Activated CD8-positive, alpha-beta memory T cell treated with anti-CD3 and anti-CD28 coated beads, Interleukin-2, amount 10 ng/mL, durations not matched to agents 7 days and 5 days (primary cell): ENCODE measurements at regions of chr9 and their contacts with region 1.

Region 1: DNA sequence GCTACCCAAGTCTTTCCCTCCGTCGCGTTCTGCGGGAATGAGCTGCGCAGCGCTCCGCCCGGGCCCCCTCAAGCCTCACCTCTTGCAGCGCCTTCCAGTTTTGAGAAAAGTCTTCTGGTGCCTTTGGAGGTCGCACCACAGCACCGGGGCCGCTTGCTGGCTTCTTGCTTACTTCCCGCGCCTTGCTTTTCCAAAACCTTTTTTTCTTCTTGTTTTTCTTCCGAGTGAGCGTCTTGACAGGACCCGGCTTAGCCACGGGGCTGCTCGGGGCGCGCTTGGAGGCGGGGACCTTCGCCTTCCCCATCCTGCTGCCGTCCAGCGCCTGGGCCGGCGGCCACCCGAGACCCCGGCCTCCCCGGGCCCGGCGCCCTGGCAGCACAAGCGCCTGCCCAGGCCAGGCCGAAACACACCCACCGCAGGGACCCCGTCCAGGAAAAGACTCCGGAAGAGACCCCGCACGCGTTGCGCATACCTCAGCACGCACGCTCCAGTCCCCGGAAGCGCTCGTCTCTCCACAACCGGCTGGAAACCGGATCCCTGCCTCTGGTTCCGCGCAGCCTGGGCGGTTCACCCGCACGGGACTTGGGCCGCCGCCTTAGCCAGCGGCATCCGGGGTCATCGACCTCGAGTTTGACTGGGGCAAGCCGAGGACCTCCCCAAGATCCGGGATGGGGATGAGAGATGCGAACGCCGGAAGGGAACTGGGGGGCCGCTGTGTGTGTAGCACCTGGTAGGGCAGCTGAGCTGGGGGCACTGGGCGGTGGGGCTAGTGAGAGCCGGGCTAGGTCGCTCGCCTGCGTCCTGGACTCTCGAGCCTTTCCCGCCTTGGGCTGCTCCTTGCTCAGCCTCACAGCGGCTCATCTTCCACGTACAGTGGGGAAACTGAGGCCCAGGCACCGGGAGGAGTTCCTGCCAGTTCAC is at the start of gene REXO4:
- DNase-seq: peak; percentile 92
- ATAC-seq: peak; percentile 90
- H3K4me3 Mint-ChIP-seq: peak within 1 kb of the TSS; percentile 88
- H3K27ac Mint-ChIP-seq: peak within 1 kb of the TSS; percentile 94
- H3K4me1 Mint-ChIP-seq: peaks cover 64% of the 10 kb centered on the region
- H3K27me3 Mint-ChIP-seq: no peaks in the 10 kb centered on the region
- total RNA-seq, gene REXO4: 27.5 to 34.1 TPM

Region 2: DNA sequence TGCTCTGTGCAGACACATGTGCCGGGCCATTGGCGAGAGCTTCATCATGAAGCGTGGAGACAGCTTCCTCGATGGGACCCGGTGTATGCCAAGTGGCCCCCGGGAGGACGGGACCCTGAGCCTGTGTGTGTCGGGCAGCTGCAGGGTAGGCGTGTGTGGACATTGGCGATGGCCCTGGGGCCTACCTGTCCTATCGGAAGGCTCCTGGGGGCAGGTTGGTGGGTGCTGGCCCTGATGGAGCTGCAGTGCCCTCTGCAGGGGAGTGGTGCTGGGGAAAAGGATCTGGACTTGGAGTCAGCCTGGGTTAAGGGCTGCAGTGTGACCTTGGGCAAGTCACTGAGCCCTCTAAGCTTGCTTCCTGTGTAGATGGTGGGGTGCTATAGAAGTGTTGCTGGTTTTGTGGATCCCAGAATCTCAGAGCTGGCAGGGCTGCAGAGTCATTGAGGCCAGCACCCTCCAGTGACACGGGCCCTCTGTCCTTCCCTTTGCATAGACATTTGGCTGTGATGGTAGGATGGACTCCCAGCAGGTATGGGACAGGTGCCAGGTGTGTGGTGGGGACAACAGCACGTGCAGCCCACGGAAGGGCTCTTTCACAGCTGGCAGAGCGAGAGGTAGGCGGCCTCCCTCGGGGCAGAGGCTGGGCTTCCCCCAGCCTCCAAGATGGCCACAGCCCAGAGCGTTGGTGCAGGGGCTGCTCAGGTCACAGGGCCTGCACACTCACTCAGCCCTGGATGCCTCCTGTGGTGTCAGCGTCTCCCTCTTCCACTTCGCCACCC is 20.1 kb after region 1 on chr9:
- CTCF ChIA-PET with region 1: no interaction called
- DNase-seq: no peak
- ATAC-seq: no peak
- H3K4me3 Mint-ChIP-seq: no peak overlapping the region
- H3K27ac Mint-ChIP-seq: no peak overlapping the region
- H3K4me1 Mint-ChIP-seq: peaks cover 4% of the 10 kb centered on the region
- H3K27me3 Mint-ChIP-seq: no peaks in the 10 kb centered on the region

Region 3: DNA sequence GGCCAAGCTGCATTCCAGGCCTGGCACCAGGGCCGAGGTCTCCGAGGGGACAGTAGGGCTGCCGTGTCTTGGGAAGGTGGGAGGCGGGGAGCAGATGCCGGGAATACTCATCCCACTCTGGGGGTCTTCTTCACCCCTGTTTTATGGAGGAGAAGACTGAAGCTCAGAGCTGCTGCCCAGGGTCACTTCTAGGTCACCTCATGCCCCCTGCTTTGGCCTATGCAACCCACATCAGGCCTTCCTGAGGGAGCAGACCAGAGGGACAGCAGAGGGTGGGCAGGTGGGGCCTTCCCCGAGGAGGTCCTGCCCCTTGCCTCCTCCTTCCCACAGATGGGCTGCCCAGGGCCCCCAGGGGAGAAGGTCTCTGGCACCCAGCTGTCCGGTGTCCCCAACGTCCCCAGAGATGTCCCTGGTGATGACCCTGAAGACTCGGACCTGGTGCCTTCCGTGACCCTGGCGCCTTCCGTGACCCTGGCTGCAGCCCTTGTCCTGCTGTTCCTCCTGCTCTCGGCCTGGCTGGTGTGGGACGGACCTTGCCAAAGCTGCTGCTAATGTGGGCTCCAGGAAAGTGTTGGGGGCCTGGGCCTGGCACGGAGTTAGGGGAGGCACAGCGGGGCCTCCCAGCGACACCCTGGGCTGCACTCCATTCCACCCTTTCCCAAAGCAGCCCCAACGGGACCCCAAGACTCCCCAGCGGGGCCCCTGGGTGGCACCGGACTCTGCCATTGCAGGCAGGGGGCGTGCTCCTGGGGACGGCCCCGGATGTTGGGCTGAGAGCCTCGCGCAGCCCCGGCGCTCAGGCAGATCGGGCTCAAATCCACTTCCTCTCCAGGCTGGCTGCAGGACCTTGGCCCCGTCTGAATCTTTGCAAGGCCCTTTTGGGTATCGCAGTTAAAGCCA is 67.8 kb after region 1 on chr9:
- CTCF ChIA-PET with region 1: interaction called, 14 read pairs
- DNase-seq: no peak
- ATAC-seq: peak; percentile 57
- H3K4me3 Mint-ChIP-seq: no peak overlapping the region
- H3K27ac Mint-ChIP-seq: no peak overlapping the region
- H3K4me1 Mint-ChIP-seq: peaks cover 6% of the 10 kb centered on the region
- H3K27me3 Mint-ChIP-seq: peaks cover 5% of the 10 kb centered on the region

Region 4: DNA sequence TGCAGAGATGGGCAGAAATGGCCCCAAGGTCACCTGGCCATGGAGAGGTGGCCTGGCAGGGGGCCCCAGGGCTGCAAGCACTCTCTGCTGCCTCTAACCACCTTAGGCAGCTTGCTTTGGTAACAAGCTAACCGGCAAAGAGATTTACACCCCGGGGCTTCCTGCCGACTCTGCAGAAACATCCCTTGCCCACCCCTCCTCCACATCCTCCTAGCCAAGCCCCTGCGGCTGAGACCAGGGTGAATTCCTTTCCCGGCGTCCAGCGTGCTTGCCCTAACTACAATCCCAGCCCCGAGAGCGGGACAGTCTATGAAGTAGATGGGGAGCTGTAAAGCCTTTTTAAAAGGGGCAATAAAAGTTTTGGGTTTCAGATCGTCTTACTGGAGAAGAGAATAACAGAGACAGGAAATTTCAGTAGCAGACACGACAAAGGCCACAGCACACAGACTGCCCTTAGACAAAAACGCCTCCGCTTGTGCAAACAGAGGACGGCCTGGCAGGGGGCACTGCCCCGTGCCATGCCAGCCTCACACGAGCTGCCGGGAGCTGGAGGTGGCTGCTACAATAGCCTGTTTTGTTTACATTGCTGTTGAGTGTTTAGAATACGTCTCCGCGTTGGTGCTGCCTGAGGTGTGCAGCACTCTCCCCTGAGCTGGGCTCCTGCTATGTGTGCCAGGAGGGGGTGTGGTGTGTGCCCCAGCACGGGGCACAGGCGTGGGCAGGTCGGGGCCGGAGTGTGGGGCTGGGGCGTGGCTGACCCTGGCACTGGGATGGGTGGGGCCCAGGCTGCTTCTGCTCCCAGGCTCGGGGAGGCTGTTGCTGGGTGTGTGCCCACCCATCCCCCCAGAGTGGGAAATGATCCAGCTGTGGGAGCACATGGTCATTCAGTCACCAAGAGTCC is 91.6 kb after region 1 on chr9:
- CTCF ChIA-PET with region 1: no interaction called
- DNase-seq: peak; percentile 48
- ATAC-seq: peak; percentile 59
- H3K4me3 Mint-ChIP-seq: peak overlapping the region; percentile 30
- H3K27ac Mint-ChIP-seq: peak overlapping the region; percentile 28
- H3K4me1 Mint-ChIP-seq: peaks cover 11% of the 10 kb centered on the region
- H3K27me3 Mint-ChIP-seq: no peaks in the 10 kb centered on the region